Naive thymus-derived CD4-positive, alpha-beta T cell (primary cell): ENCODE measurements at regions of chr7 and their contacts with region 1.

Region 1: GRCh38 chr7:44565097-44565794 is 8.5 kb downstream of the DDX56 start:
- DNase-seq: peak; percentile 25 to 72 (median 57)
- ATAC-seq: peak; percentile 92
- H3K4me3 ChIP-seq: no peak overlapping the region
- H3K4me3 Mint-ChIP-seq: no peak overlapping the region
- H3K27ac ChIP-seq: peak overlapping the region; percentile 41
- H3K27ac Mint-ChIP-seq: peak overlapping the region; percentile 3 to 83 (median 42)
- H3K4me1 ChIP-seq: no peaks in the 10 kb centered on the region
- H3K4me1 Mint-ChIP-seq: peaks cover 5 to 20% (median 11%) of the 10 kb centered on the region in 7 donors
- H3K27me3 ChIP-seq: no peaks in the 10 kb centered on the region
- H3K27me3 Mint-ChIP-seq: no peaks in the 10 kb centered on the region

Region 2: DNA sequence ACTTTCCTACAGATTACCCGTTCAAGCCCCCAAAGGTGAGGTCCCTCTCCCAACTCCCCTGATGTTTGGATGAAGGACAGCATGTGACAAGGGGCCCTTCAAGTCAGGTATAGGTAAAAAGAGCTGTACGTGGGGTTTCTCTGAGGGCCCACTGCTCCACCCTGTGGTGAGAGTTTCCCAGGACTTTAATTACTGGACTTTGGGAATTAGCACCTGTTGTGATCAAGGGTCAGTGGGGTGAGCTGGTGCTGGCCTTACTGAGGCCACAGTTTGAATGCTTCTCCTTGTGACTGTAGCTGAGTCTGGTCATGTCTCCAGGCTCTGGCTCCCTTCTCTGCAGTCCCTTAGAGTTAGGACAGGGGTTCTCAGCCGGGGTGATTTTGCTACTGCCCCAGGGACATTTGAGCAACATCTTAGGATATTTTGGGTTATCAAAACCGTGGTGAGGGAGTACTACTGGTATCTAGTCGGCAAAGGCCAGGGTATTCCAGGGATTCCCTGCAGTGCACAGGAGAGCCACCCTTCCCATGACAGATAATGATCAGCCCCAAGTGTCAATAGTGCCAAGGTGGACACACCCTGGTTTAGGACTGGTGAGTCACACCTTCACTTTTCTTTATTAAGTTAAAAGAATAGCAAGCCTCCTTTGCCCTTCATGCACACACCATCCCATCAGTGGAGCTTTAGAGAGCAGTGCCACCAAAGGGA is 622.1 kb before region 1 on chr7:
- CTCF ChIA-PET with region 1: no interaction called
- POLR2A ChIA-PET with region 1: no interaction called
- intact Hi-C with region 1: no loop called
- DNase-seq: no peak
- ATAC-seq: no peak
- H3K4me3 ChIP-seq: no peak overlapping the region
- H3K4me3 Mint-ChIP-seq: no peak overlapping the region
- H3K27ac ChIP-seq: no peak overlapping the region
- H3K27ac Mint-ChIP-seq: peak overlapping the region in 2 of 9 donors; percentile 17 to 65
- H3K4me1 ChIP-seq: no peaks in the 10 kb centered on the region
- H3K4me1 Mint-ChIP-seq: peaks cover 0 to 6% (median 0%) of the 10 kb centered on the region in 7 donors
- H3K27me3 ChIP-seq: no peaks in the 10 kb centered on the region
- H3K27me3 Mint-ChIP-seq: no peaks in the 10 kb centered on the region

Region 3: GRCh38 chr7:44375236-44375699 is 190.0 kb before region 1 on chr7:
- CTCF ChIA-PET with region 1: no interaction called
- POLR2A ChIA-PET with region 1: no interaction called
- intact Hi-C with region 1: loop called in 1 of 2 experiments (anchors 1 kb)
- DNase-seq: no peak
- ATAC-seq: no peak
- H3K4me3 ChIP-seq: no peak overlapping the region
- H3K4me3 Mint-ChIP-seq: no peak overlapping the region
- H3K27ac ChIP-seq: no peak overlapping the region
- H3K27ac Mint-ChIP-seq: no peak overlapping the region
- H3K4me1 ChIP-seq: no peaks in the 10 kb centered on the region
- H3K4me1 Mint-ChIP-seq: peaks cover 0 to 9% (median 0%) of the 10 kb centered on the region in 7 donors
- H3K27me3 ChIP-seq: no peaks in the 10 kb centered on the region
- H3K27me3 Mint-ChIP-seq: peaks cover under 1 to 13% (median 10%) of the 10 kb centered on the region in 5 donors

Region 4: GRCh38 chr7:44431091-44431608 is 134.1 kb before region 1 on chr7:
- CTCF ChIA-PET with region 1: interaction called, 3 read pairs
- POLR2A ChIA-PET with region 1: no interaction called
- intact Hi-C with region 1: loop called in 1 of 2 experiments (anchors 1 kb)
- DNase-seq: peak in 3 of 9 donors; percentile 8 to 14 (median 12)
- ATAC-seq: peak; percentile 34
- H3K4me3 ChIP-seq: no peak overlapping the region
- H3K4me3 Mint-ChIP-seq: no peak overlapping the region
- H3K27ac ChIP-seq: no peak overlapping the region
- H3K27ac Mint-ChIP-seq: peak overlapping the region in 5 of 9 donors; percentile 36 to 86 (median 62)
- H3K4me1 ChIP-seq: no peaks in the 10 kb centered on the region
- H3K4me1 Mint-ChIP-seq: peaks cover 18 to 69% (median 60%) of the 10 kb centered on the region in 7 donors
- H3K27me3 ChIP-seq: no peaks in the 10 kb centered on the region
- H3K27me3 Mint-ChIP-seq: no peaks in the 10 kb centered on the region